Upper lobe of right lung (tissue), 1 donor: ENCODE measurements at regions of chr10 and their contacts with region 1.

Region 1: DNA sequence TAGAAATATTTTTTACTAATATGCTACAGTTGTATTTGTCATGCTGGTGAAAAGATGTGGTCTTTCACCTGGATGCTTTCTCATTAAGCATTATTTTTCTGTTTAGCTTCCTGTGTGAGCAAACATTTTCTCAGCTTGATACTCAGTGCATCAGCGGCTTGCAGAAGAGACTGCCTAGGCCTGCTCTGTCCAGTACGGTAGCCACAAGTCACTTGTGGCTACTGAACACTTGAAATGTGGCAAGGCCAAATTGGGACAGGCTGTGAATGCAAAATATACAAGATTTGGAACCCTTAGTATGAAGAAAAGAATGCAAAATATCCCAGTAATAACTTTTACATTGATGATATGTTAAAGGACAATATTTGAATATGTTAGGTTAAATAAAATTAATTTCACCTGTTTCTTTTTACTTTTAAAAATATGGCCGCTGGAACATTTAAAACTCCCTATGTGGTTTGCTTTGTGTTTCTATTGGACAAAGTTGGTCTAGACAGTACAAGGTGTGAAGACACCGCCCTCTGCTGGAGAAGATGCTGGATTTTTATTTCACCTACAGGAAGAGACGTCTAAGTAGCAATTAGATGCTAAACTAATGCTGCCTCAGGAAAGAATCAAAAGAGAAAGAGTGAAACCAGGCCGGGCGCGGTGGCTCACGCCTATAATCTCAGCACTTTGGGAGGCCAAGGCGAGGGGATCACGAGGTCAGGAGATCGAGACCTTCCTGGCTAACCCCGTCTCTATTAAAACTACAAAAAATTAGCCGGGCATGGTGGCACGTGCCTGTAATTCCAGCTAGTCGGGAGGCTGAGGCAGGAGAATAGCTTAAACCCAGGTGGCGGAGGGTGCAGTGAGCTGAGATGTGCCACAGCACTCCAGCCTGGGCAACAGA is 5.3 kb downstream of the SRGN start:
- DNase-seq: no peak
- ATAC-seq: peak; percentile 92
- H3K4me3 ChIP-seq: no peak overlapping the region
- H3K27ac ChIP-seq: no peak overlapping the region
- H3K4me1 ChIP-seq: peaks cover 18% of the 10 kb centered on the region
- H3K27me3 ChIP-seq: no peaks in the 10 kb centered on the region
- CTCF ChIP-seq: peak; percentile 73

Region 2: GRCh38 chr10:69004821-69005220 is 88.4 kb before region 1 on chr10:
- intact Hi-C with region 1: loop called (anchors 5 kb)
- DNase-seq: no peak
- ATAC-seq: peak; percentile 55
- H3K4me3 ChIP-seq: no peak overlapping the region
- H3K27ac ChIP-seq: no peak overlapping the region
- H3K4me1 ChIP-seq: no peaks in the 10 kb centered on the region
- H3K27me3 ChIP-seq: no peaks in the 10 kb centered on the region
- CTCF ChIP-seq: peak; percentile 62